ENCODE measurements at regions of chr13 and their contacts with region 1.

Region 1: DNA sequence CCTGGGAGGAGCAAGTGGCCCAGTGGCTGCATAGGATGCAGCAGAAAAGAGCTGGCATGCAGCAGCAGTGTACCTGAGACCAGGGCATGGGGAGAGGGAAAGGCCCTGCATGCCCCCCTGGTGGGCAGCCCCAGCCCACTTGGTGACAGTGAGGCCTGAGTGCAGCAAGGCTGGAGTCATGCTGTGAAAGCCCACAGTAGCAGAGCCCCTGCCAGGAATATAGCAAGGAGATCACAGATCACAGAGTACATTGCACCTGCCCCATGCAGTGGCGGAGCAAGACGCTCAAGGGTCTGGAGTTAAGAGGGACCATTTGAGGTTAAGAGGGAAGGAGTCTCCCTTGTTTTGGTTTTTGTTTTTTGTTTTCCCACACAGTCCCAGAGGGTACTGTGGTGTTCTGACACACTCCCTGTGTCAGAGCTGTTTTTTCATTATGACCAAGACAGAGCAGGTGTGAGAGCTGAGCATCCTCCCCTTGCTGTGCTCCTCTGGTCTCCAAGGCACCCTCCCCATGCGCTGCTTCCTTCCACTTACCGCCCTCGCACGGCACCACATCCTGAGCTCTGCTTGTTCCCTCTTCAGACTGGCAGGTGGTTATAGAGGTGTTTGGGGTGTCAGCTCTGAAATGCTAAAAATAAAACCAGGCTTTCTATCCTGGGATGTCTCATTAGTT is 85.0 kb upstream of the UBL3 start:
- DNase-seq: peak; percentile 82
- H3K4me3 Mint-ChIP-seq: peak overlapping the region; percentile 86
- H3K27ac Mint-ChIP-seq: peak overlapping the region; percentile 95
- H3K4me1 Mint-ChIP-seq: peaks cover 69% of the 10 kb centered on the region
- H3K27me3 Mint-ChIP-seq: no peaks in the 10 kb centered on the region

Region 2: DNA sequence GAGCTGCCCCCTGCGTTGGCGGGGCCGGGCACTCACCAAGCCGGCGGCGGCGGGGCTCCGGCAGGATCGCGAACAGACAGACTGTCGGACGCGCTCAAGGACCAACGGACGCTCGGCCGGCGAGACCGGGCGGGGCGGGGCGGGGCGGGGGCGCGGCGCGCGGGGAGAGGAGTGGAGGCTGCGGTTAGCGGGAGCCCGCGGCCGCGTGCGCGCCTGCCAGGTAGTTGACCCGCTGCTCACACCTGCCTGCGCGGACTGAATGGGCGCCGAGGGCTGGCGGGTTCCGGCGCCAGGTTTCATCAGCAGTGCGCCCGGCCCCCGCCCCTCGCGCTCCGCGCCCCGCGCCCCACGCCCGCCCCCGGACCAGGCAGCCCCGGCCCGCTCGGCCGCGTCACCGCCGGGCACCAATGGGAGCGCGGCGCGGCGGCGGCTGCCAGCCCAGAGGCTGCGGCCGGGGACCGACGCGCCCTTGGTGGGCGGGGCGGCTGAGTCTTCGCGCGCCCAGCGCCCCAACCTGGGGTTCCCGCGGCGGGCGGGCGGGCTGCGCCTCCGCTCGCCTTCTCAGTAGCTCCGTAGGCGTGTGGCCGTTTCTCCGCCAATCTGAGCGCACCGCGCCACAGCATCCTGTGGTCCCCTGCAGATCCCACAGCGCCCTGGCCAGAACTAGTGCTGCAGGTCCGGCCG is 339.9 kb before region 1 on chr13 and contains the start of gene SLC7A1:
- intact Hi-C with region 1: loop called (anchors 2 kb)
- DNase-seq: peak; percentile 88
- H3K4me3 Mint-ChIP-seq: peak within 1 kb of the TSS; percentile 95
- H3K27ac Mint-ChIP-seq: peak within 1 kb of the TSS; percentile 95
- H3K4me1 Mint-ChIP-seq: peaks cover 51% of the 10 kb centered on the region
- H3K27me3 Mint-ChIP-seq: peaks cover 6% of the 10 kb centered on the region
- total RNA-seq, gene SLC7A1: 128 and 138 TPM in 2 replicates

Region 3: GRCh38 chr13:29884671-29885430 is 50.6 kb before region 1 on chr13:
- intact Hi-C with region 1: no loop called
- DNase-seq: no peak
- H3K4me3 Mint-ChIP-seq: no peak overlapping the region
- H3K27ac Mint-ChIP-seq: no peak overlapping the region
- H3K4me1 Mint-ChIP-seq: peaks cover 32% of the 10 kb centered on the region
- H3K27me3 Mint-ChIP-seq: peaks cover 4% of the 10 kb centered on the region

Region 4: DNA sequence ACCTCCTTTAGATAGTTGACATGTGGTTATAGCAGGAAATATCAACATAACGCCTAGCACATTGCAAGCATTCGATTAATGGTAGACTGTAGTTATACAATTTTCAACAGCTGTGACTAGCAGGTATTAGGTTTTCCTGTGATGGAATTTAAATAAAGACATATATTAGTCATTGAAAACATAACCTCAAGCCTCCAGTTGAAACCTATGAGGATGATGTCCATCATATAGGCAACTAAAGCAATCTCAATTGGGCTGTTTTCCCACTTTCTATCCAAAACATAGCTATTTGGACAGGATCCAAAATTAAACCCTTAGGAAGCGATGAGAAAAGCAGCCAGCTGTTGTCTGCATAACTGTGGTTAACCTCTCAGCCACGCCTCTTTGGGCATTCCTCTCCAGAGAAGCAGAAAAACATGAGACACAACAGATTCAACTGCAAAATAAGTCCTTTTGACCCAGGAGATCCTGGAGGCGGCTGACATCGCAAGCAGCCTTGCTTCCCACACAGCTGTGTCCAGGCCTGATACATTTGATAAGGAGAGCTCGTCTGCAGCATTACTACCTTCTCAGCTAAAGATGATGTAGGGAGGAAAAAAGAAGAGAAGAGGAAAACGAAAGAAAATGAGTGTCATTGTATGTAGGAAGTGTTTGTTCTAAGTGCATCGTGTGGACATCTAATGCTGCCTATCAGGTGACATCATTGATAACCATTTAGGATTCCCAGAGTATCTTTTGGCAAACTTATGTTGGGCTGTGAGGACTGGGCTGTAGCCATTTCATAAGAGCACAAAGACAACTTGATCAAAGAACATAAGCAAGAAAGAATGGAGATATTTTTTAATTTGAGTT is 33.1 kb before region 1 on chr13:
- intact Hi-C with region 1: loop called (anchors 1 kb)
- DNase-seq: peak; percentile 43
- H3K4me3 Mint-ChIP-seq: peak overlapping the region; percentile 79
- H3K27ac Mint-ChIP-seq: peak overlapping the region; percentile 86
- H3K4me1 Mint-ChIP-seq: peaks cover 31% of the 10 kb centered on the region
- H3K27me3 Mint-ChIP-seq: peaks cover 23% of the 10 kb centered on the region

Region 5: DNA sequence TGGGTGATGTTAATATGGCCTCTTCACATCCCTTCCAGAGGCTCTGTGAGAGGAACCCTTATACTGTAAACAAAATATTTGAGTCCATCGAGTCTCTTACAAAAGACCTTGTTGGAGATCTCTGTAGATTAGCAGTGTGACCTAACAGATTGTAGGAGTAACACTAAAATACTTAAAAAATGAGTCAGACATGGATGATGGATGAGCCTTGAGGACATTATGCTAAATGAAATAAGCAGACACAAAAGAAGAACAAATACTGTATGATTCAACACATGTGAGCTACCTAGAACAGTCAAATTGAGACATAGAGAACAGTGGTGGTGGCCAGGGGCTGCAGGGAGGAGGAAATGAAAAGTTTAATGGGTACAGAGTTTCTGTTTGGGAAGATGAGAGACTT is 67.1 kb after region 1 on chr13:
- intact Hi-C with region 1: loop called (anchors 2 kb)
- DNase-seq: no peak
- H3K4me3 Mint-ChIP-seq: no peak overlapping the region
- H3K27ac Mint-ChIP-seq: no peak overlapping the region
- H3K4me1 Mint-ChIP-seq: peaks cover 36% of the 10 kb centered on the region
- H3K27me3 Mint-ChIP-seq: no peaks in the 10 kb centered on the region

Region 6: GRCh38 chr13:30114571-30115256 is 179.3 kb after region 1 on chr13:
- intact Hi-C with region 1: loop called (anchors 1 kb)
- DNase-seq: peak; percentile 86
- H3K4me3 Mint-ChIP-seq: peak overlapping the region; percentile 81
- H3K27ac Mint-ChIP-seq: no peak overlapping the region
- H3K4me1 Mint-ChIP-seq: peaks cover 44% of the 10 kb centered on the region
- H3K27me3 Mint-ChIP-seq: peaks cover 18% of the 10 kb centered on the region

Region 7: DNA sequence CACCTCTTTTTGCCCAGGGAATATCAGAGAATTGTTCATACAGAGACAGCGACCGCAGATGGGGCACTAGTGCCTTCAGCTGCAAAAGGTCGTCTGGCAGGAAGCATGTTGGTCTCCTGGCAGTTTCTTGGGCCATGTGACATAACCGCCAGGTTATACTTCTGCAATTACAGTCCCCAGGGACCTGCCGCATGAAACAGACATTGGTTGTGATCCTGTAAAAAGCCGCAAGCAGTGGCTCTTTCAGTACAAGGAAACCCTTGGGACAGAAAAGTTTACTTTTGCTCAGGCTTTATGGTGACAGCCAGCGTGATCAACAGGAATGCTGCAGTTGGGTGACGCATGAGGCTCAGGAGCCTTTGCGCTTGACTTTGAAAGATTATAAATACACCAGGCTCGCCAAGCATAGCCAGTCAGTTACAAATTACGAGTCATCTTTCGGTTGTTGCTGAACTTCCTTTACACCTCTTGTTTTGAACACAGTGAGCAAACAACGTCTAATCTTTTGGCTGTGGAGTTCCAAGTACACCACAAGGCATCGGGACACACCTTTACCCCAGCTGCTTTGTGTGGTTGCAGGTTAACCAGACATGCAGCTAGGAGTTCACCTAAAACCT is 436.3 kb after region 1 on chr13:
- intact Hi-C with region 1: loop called (anchors 10 kb)
- DNase-seq: peak; percentile 65
- H3K4me3 Mint-ChIP-seq: peak overlapping the region; percentile 68
- H3K27ac Mint-ChIP-seq: peak overlapping the region; percentile 84
- H3K4me1 Mint-ChIP-seq: peaks cover 80% of the 10 kb centered on the region
- H3K27me3 Mint-ChIP-seq: no peaks in the 10 kb centered on the region

Measured in activated T-helper 1 cell treated with anti-CD3 and anti-CD28 coated beads, Interleukin-12 subunit alpha, Interleukin-12 subunit beta, Interleukin-2, Interleukin-4 antibody, amounts not matched to agents 30 ng/mL and 10 ng/mL and 1 ng/mL, durations not matched to agents 14 hours and 24 hours and 36 hours (primary cell).